ENCODE measurements at regions of chr2 and their contacts with region 1.

Region 1: GRCh38 chr2:218269899-218270720 is at the starts of genes AAMP and PNKD:
- DNase-seq: peak; percentile 100
- H3K4me3 Mint-ChIP-seq: peak within 1 kb of the TSS; percentile 89
- H3K27ac Mint-ChIP-seq: peak within 1 kb of the TSS; percentile 87
- H3K4me1 Mint-ChIP-seq: peaks cover 38% of the 10 kb centered on the region
- H3K27me3 Mint-ChIP-seq: peaks cover 1% of the 10 kb centered on the region
- total RNA-seq, gene AAMP: 88.0 and 90.2 TPM in 2 replicates
- total RNA-seq, gene PNKD: 18.6 and 20.3 TPM in 2 replicates

Region 2: DNA sequence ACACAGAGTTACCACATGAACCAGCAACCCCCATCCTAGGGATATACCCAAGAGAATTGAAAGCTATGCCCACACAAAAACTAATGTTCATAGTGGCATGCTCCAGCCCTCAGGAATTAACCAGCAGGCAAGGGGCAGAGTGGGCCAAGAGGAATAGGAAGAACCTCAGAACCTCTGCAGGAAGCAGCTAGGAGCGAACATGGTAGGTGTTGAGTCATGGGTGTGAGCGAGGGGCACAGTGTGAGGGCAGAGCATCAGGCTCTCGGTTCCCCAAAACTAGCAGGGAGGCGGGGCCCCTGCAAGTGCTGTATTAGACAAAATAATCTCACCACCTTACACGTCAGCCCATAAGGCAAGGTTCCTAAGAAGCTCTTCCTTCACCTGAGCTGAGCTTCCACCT is 206.6 kb before region 1 on chr2:
- intact Hi-C with region 1: no loop called
- DNase-seq: no peak
- H3K4me3 Mint-ChIP-seq: no peak overlapping the region
- H3K27ac Mint-ChIP-seq: no peak overlapping the region
- H3K4me1 Mint-ChIP-seq: peaks cover under 1% of the 10 kb centered on the region
- H3K27me3 Mint-ChIP-seq: peaks cover 12% of the 10 kb centered on the region

Region 3: DNA sequence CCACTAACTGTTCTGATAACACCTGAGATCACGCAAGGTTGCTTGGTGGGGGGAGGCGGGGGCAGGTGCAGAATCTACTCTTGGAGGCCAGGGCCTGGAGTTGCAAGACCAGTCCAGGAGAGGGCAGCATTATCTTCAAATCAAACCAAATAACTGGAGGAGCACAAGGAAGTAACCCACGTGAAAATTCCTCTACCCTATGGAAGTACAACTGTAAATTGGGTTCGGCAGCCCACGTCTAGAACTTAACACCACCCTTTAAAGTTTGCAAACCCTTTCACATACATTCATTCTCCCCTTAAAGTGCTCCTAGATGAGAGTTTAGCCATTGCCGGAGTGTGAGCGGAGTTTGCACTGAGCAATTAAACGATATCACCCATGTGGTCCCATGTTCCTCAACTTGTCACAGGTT is 83.7 kb before region 1 on chr2:
- intact Hi-C with region 1: loop called (anchors 1 kb)
- DNase-seq: peak; percentile 47
- H3K4me3 Mint-ChIP-seq: no peak overlapping the region
- H3K27ac Mint-ChIP-seq: no peak overlapping the region
- H3K4me1 Mint-ChIP-seq: peaks cover 10% of the 10 kb centered on the region
- H3K27me3 Mint-ChIP-seq: peaks cover 5% of the 10 kb centered on the region

Region 4: DNA sequence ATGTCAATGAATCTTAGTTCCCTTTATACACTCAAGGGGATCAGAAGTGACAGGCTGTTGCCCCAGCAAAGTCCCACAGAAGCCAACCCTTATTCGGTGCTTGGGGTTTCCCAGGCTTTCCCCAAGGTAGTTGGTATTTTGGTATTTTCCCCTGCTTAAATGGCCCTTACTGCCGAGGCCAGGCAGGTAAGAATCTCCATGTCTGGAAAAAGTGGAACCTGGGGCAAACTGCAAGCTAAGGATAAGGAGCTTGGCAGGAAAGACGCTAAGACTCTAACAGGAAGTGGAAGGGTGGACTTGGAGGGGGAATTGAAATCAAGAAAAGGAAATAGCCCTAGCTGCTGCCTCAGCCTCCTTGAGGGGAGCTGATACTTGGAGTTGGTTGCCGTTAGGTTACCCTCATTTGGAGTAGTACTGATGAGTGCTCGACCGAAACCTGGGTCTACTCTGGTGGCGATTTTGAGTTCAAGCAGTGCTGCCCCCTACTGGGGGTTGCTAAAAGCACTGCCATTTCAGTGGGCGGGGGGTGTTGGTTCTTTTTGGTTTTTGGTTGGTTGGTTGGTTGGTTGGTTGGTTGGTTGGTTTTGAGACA is 12.6 kb before region 1 on chr2:
- intact Hi-C with region 1: loop called (anchors 1 kb)
- DNase-seq: peak; percentile 46
- H3K4me3 Mint-ChIP-seq: no peak overlapping the region
- H3K27ac Mint-ChIP-seq: peak overlapping the region; percentile 83
- H3K4me1 Mint-ChIP-seq: peaks cover 31% of the 10 kb centered on the region
- H3K27me3 Mint-ChIP-seq: no peaks in the 10 kb centered on the region

Region 5: DNA sequence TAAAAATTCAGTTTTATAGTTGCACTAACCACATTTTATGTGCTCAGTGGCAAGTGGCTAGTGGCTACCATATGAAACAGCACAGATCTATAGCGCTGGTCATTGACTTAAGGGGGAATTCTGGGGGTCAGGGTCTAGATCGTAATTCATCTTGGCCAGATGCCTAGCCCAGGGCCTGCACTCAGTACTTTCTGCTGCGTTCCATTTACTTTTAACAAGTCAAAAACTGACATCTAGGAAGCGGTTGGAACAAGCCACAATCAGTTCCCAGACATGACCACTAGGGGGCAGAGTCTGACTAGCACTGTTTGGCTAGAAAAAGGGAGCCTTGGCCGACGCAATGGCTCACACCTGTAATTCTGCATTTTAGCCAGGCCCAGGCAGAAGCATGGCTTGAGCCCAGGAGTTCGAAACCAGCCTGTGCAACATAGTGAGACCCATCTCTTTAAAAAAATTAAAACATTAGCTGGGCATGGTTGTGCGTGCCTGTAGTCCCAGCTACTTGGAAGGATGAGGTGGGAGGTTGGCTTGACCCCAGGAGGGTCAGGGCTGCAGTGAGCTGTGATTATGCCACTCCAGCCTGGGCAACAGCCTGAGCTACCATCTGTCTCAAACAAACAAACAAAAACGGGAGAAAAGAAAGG is 31.2 kb after region 1 on chr2:
- intact Hi-C with region 1: loop called (anchors 1 kb)
- DNase-seq: peak; percentile 83
- H3K4me3 Mint-ChIP-seq: no peak overlapping the region
- H3K27ac Mint-ChIP-seq: no peak overlapping the region
- H3K4me1 Mint-ChIP-seq: peaks cover 5% of the 10 kb centered on the region
- H3K27me3 Mint-ChIP-seq: peaks cover 2% of the 10 kb centered on the region

Region 6: GRCh38 chr2:218406209-218406948 is 136.3 kb after region 1 on chr2:
- intact Hi-C with region 1: loop called (anchors 1 kb)
- DNase-seq: peak; percentile 90
- H3K4me3 Mint-ChIP-seq: peak overlapping the region; percentile 81
- H3K27ac Mint-ChIP-seq: peak overlapping the region; percentile 74
- H3K4me1 Mint-ChIP-seq: peaks cover 29% of the 10 kb centered on the region
- H3K27me3 Mint-ChIP-seq: no peaks in the 10 kb centered on the region

Region 7: GRCh38 chr2:218659258-218659987 is 389.3 kb after region 1 on chr2 and contains the starts of genes BCS1L and ZNF142:
- intact Hi-C with region 1: loop called (anchors 1 kb)
- DNase-seq: peak; percentile 92
- H3K4me3 Mint-ChIP-seq: peak within 1 kb of the TSS; percentile 99
- H3K27ac Mint-ChIP-seq: peak within 1 kb of the TSS; percentile 97
- H3K4me1 Mint-ChIP-seq: peaks cover 29% of the 10 kb centered on the region
- H3K27me3 Mint-ChIP-seq: no peaks in the 10 kb centered on the region
- total RNA-seq, gene BCS1L: 85.1 and 85.3 TPM in 2 replicates
- total RNA-seq, gene ZNF142: 61.8 and 64.4 TPM in 2 replicates

Region 8: GRCh38 chr2:219543601-219544358 is 1273.7 kb after region 1 on chr2 and contains the starts of genes CHPF and TMEM198:
- intact Hi-C with region 1: loop called (anchors 5 kb)
- DNase-seq: peak; percentile 94
- H3K4me3 Mint-ChIP-seq: peak within 1 kb of the TSS; percentile 93
- H3K27ac Mint-ChIP-seq: peak within 1 kb of the TSS; percentile 85
- H3K4me1 Mint-ChIP-seq: peaks cover 20% of the 10 kb centered on the region
- H3K27me3 Mint-ChIP-seq: peaks cover 25% of the 10 kb centered on the region
- total RNA-seq, gene CHPF: 41.3 and 43.4 TPM in 2 replicates
- total RNA-seq, gene TMEM198: 2.9 and 3.3 TPM in 2 replicates